ENCODE measurements at regions of chr6 and their contacts with region 1.

Region 1: DNA sequence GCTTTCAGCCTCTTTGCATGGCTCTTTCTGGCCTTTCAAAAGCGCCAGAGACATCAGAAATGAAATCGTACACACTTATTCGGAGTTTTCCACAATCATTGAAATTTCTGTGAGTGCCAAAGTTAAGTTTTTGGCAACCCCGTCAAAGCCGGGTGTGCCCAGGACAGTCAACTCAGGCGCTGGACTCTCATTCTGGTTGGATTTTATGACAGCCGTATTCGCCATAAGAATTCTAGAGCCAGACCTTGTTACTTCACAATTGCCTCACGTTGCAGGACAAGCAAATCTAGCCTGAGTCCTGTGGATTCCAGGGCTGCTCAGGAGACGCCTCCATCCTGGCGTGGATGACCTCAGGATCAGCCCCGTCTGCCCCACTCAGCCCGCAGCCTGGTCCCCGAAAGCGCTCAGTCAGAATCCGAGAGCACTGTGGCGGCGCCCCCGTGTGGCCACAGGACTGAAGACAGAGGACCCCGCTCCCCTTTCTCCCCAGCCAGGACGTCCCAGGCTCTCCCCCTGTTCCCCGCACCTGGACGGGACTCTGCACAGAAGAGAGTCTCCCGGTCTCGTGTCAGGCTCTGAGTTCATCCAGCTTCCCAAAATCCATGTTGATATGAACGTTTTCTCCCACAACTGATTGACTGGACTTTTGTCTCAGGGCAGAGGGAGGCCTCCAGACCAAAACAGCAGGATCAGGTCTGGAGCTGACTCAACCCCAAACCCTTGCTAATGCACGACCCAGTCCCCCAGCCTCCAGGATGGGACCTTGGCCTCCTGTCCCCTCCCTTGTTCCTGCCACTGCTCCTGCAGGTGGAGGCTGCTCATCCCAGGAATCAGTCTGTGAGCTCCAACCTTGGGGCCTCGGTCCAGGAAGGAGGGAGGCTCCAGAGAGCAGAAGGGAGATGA is 38.2 kb downstream of the MICA start:
- DNase-seq: peak; percentile 71 to 76 (median 72)
- H3K4me3 ChIP-seq: peak overlapping the region in 1 of 7 experiments; percentile 28
- H3K27ac ChIP-seq: no peak overlapping the region
- H3K4me1 ChIP-seq: peaks cover 0 to 4% (median 1%) of the 10 kb centered on the region in 4 experiments
- H3K27me3 ChIP-seq: peaks cover 4 to 10% (median 7%) of the 10 kb centered on the region in 5 experiments

Region 2: DNA sequence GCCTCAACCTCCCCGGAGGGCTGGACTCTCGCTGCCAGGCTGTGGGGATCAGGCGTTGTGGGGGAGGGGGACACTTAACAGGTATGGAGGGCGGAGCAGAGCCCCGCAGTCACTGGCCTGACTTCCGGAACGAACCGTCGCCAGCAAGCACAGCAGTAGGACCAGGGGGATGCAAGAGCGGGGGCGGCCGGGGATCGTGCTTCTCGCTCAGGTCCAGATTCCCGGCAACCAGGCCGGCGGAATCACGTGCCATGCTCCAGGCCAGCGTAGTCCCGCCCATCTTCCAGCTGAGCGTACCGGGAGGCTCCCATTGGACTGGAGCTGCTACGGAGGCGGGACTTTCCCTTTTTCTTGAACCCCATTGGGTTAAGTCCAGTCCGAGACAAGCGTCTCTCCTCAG is 261.1 kb before region 1 on chr6:
- CTCF ChIA-PET with region 1: no interaction called
- POLR2A ChIA-PET with region 1: no interaction called
- DNase-seq: peak; percentile 81 to 84 (median 82)
- H3K4me3 ChIP-seq: peak overlapping the region; percentile 13 to 73 (median 44)
- H3K27ac ChIP-seq: no peak overlapping the region
- H3K4me1 ChIP-seq: peaks cover 0 to 9% (median 1%) of the 10 kb centered on the region in 4 experiments
- H3K27me3 ChIP-seq: no peaks in the 10 kb centered on the region

Region 3: DNA sequence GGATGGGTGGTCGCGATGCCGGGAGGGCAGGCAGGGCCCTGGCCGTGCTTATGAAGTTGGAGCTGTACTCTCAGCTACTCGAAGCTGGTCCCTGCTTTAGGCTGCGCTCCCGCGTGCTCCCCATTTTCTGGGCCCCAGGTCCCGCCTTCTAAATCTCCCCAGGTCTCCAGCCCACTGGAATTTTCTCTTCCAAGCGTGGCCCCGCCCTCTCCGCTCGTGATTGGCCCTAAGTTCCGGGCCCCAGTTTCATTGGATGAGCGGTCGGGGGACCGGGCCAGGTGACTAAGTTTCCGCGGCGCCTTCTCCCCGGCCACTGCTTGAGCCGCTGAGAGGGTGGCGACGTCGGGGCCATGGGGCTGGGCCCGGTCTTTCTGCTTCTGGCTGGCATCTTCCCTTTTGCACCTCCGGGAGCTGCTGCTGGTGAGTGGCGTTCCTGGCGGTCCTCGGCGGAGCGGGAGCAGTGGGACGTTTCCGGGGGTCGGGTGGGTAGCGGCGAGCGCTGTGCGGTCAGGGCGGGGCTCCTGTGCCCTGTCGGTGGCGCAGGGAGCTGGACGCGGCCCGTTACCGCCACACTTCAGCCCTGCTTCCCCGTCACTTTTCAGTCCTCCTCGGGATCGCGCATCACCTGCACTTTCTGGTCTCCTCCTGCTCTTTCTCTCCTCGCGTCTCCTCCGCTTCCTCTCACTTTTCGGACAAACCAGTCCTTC is 38.2 kb before region 1 on chr6 and contains the start of gene MICA:
- CTCF ChIA-PET with region 1: interaction called, 77 read pairs
- POLR2A ChIA-PET with region 1: interaction called, 5 read pairs
- DNase-seq: peak; percentile 63 to 82 (median 72)
- H3K4me3 ChIP-seq: peak within 1 kb of the TSS; percentile 55 to 88 (median 75)
- H3K27ac ChIP-seq: peak within 1 kb of the TSS in 1 of 2 experiments; percentile 61
- H3K4me1 ChIP-seq: peaks cover 7 to 46% (median 38%) of the 10 kb centered on the region in 4 experiments
- H3K27me3 ChIP-seq: no peaks in the 10 kb centered on the region

Region 4: GRCh38 chr6:31430449-31430848 is 11.2 kb before region 1 on chr6:
- CTCF ChIA-PET with region 1: interaction called, 19 read pairs
- POLR2A ChIA-PET with region 1: no interaction called
- DNase-seq: peak in 1 of 3 donors; percentile 25
- H3K4me3 ChIP-seq: no peak overlapping the region
- H3K27ac ChIP-seq: no peak overlapping the region
- H3K4me1 ChIP-seq: no peaks in the 10 kb centered on the region
- H3K27me3 ChIP-seq: peaks cover 0 to 2% (median 0%) of the 10 kb centered on the region in 5 experiments

Region 5: DNA sequence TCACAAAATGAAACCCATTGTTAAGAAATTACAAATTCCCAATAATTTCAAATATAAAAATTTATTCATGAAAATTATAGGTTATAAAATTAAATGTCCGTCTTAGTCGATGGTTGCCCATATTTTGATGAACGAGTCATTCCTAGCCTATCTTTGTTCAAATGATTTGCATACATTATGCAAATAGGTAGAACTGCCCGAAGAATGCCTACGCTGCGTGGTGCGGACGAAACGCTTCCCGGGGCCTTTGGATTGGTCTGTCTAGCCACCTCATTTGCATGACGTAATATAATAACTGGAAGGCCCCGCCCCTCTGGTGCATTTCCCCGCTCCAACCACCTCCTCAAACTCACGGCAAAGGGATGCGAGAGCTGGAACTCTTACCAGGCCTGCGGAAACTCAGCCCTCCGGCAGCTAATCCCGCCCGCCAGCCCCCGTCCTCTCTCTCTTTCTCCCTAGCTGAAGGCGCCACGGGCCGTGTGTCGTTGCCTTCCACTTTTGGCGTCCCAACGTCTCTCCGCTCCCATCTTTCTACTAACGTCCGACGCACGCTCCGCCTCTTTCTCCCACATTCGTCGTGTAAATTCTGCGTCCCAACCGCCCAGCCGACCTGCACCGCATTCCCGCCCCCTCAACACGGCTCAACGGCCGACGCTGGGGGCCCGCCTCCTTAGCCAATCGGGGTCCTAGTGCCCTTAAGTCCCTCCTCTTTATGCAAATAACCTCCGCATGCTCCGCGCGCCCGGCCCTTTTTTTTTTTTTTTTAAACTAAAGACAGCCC is 178.4 kb after region 1 on chr6:
- CTCF ChIA-PET with region 1: no interaction called
- POLR2A ChIA-PET with region 1: no interaction called
- DNase-seq: peak; percentile 99 to 100 (median 99)
- H3K4me3 ChIP-seq: peak overlapping the region; percentile 29 to 95 (median 78)
- H3K27ac ChIP-seq: peak overlapping the region; percentile 94 to 97
- H3K4me1 ChIP-seq: peaks cover 25 to 54% (median 47%) of the 10 kb centered on the region in 4 experiments
- H3K27me3 ChIP-seq: no peaks in the 10 kb centered on the region